K562 (cell line): ENCODE measurements at regions of chr12 and their contacts with region 1.

Region 1: GRCh38 chr12:107131832-107132616 is 38.7 kb upstream of the CRY1 start:
- DNase-seq: peak; percentile 44 to 67 (median 58)
- ATAC-seq: peak; percentile 84
- H3K4me3 ChIP-seq: no peak overlapping the region
- H3K27ac ChIP-seq: no peak overlapping the region
- H3K4me1 ChIP-seq: no peaks in the 10 kb centered on the region
- H3K27me3 ChIP-seq: no peaks in the 10 kb centered on the region
- CTCF ChIP-seq: peak; percentile 72 to 93 (median 84)
- EP300 ChIP-seq: no peak
- POLR2A ChIP-seq: no peak
- RAD21 ChIP-seq: peak; percentile 82 to 91

Region 2: GRCh38 chr12:107179871-107180270 is 47.8 kb after region 1 on chr12:
- CTCF ChIA-PET with region 1: no interaction called
- POLR2A ChIA-PET with region 1: no interaction called
- in situ Hi-C with region 1: no loop called
- intact Hi-C with region 1: no loop called
- DNase-seq: no peak
- ATAC-seq: no peak
- H3K4me3 ChIP-seq: no peak overlapping the region
- H3K27ac ChIP-seq: no peak overlapping the region
- H3K4me1 ChIP-seq: no peaks in the 10 kb centered on the region
- H3K27me3 ChIP-seq: peaks cover 2 to 5% of the 10 kb centered on the region in 2 experiments; a peak in 3 of 5 replicates
- CTCF ChIP-seq: no peak
- EP300 ChIP-seq: no peak
- POLR2A ChIP-seq: no peak
- RAD21 ChIP-seq: no peak

Region 3: GRCh38 chr12:107317751-107318613 is 186.0 kb after region 1 on chr12:
- CTCF ChIA-PET with region 1: no interaction called
- POLR2A ChIA-PET with region 1: no interaction called
- in situ Hi-C with region 1: no loop called
- intact Hi-C with region 1: loop called (anchors 10 kb)
- DNase-seq: peak; percentile 83 to 92 (median 84)
- ATAC-seq: peak; percentile 99
- H3K4me3 ChIP-seq: peak overlapping the region; percentile 35
- H3K27ac ChIP-seq: no peak overlapping the region
- H3K4me1 ChIP-seq: peaks cover 0 to 24% of the 10 kb centered on the region in 2 experiments; a peak in 2 of 5 replicates
- H3K27me3 ChIP-seq: peaks cover 2 to 34% of the 10 kb centered on the region in 2 experiments; a peak in 4 of 5 replicates
- CTCF ChIP-seq: peak; percentile 35 to 56 (median 48); a peak in 5 of 6 replicates
- EP300 ChIP-seq: no peak
- POLR2A ChIP-seq: no peak
- RAD21 ChIP-seq: no peak

Region 4: DNA sequence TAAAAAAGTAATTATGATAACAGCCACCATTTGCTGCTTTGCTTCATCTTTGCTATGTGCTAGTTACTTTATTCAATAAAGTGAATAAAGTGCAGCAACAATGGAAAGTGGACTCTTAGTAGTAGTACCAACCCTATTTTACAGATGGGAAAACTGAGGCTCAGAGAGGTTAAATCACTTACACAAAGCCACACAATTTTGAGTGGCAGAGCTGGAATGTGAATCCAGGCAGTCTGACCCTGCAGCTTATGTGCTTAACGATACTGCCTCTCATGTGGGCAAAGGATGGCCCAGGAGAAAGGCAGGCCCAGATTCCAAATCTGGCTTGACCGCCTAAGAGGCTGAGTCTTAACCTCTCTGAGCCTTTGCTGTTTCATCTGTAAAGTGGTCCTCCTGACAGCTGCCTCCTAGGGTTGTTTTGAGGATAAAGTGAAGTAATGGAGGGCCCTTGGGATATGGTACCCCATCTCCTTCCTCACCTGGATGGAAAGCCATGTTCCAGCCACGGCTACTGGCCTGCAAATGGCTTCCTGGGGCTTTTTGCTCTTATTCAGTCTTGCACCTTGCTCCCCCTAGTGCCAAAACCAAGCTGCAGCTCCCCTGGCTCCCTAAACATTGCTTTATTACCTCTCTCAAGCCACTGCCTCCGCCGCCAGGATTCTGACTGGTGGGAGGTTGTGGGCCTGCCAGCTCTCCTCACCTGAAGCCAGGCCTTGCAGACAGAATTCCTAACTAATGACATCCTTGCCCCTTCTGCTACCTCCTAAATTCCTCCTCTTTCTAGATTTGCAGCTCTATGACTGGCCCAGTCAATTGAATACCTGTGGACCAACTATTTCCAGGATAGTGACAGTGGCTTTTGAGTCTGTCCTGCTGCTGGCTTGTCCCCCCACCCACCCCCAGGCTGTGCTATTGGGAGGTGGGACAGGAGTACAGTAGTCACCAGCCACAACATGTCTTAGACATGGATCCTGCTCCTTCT is 270.3 kb after region 1 on chr12:
- CTCF ChIA-PET with region 1: interaction called, 8 read pairs
- POLR2A ChIA-PET with region 1: no interaction called
- in situ Hi-C with region 1: loop called (anchors 10 kb)
- intact Hi-C with region 1: loop called (anchors 1 kb)
- DNase-seq: peak; percentile 32 to 60 (median 44)
- ATAC-seq: peak; percentile 90
- H3K4me3 ChIP-seq: no peak overlapping the region
- H3K27ac ChIP-seq: no peak overlapping the region
- H3K4me1 ChIP-seq: no peaks in the 10 kb centered on the region
- H3K27me3 ChIP-seq: peaks cover 0 to 3% of the 10 kb centered on the region in 2 experiments; a peak in 1 of 5 replicates
- CTCF ChIP-seq: peak; percentile 65 to 74 (median 73)
- EP300 ChIP-seq: no peak
- POLR2A ChIP-seq: no peak
- RAD21 ChIP-seq: peak; percentile 15 to 60; a peak in 2 of 4 replicates